Left ventricle myocardium inferior (tissue), 1 donor: ENCODE measurements at regions of chr6 and their contacts with region 1.

Region 1: DNA sequence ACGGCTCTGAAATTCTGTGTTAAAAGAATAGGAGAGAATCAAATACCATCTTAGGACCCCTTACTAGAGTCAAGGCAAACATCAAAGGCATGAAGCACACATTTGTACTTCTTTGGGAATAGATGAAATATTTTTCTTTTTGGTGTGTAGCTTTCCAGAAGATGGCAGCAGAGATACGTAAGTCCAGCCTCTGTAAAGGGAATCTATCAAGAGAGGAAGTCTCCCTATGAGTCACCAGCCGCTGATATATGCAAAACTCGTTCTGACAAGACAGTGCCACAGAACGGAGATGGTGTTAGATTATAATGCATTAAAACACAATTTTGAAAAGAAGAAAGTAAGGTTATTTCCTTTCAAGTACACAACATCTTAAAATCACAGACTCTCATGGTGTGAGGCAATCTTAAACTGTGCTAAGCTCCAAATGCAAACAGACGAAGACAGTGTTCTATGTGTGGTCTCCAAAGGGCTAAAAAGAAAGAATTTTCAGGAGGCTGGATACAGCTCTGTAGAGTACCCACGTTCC is 120.0 kb upstream of the AGPAT4 start:
- DNase-seq: no peak
- H3K4me3 ChIP-seq: peak overlapping the region; percentile 26
- H3K27ac ChIP-seq: no peak overlapping the region
- H3K4me1 ChIP-seq: peaks cover 11% of the 10 kb centered on the region
- H3K27me3 ChIP-seq: no peaks in the 10 kb centered on the region
- CTCF ChIP-seq: peak; percentile 70

Region 2: DNA sequence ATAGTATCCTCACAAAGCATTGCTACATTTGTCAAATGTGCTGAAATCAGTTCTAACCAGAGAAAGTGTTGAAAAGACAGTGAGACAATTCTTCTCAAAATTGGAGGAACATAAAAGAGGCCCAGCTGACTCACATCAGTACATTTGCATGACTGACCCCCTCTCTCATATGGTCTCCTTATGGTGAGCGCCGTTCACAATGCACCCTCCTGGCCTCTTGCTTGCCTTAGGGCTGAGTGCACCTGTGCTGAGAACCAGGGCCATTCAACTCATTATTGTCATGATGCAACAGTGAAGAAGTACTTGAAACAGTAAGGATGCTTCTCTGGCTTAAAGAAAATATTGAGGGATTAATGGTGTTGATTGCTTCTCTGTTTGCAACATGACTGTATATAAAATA is 255.2 kb after region 1 on chr6:
- intact Hi-C with region 1: no loop called
- DNase-seq: no peak
- H3K4me3 ChIP-seq: no peak overlapping the region
- H3K27ac ChIP-seq: no peak overlapping the region
- H3K4me1 ChIP-seq: no peaks in the 10 kb centered on the region
- H3K27me3 ChIP-seq: no peaks in the 10 kb centered on the region
- CTCF ChIP-seq: no peak

Region 3: DNA sequence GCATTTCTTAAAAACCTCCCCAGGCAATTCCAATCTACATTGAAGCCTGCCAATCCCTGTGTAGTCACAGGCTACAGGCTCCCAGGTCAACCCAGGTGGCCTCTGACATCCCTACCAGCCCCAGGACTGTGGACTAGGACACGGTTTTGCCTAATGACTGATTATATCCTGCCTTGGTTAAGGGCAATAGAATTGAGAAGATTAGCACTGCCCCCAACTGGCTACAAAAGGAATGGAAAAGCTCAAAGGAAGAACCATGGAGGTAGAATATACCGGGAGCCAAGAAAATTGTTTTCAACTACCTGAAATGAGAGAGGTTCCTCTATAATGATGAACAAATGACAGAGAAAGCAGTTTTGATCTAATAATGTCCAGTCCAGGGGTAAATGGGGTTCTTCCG is 301.1 kb after region 1 on chr6:
- intact Hi-C with region 1: loop called (anchors 10 kb)
- DNase-seq: no peak
- H3K4me3 ChIP-seq: no peak overlapping the region
- H3K27ac ChIP-seq: no peak overlapping the region
- H3K4me1 ChIP-seq: no peaks in the 10 kb centered on the region
- H3K27me3 ChIP-seq: no peaks in the 10 kb centered on the region
- CTCF ChIP-seq: peak; percentile 58